CD4-positive, alpha-beta T cell (primary cell): ENCODE measurements at regions of chrX and their contacts with region 1.

Region 1: GRCh38 chrX:54044126-54044876 is at the start of gene PHF8:
- DNase-seq: peak; percentile 89 to 97 (median 94)
- ATAC-seq: peak; percentile 84
- H3K4me3 ChIP-seq: peak within 1 kb of the TSS; percentile 75
- H3K4me3 Mint-ChIP-seq: peak within 1 kb of the TSS; percentile 96
- H3K27ac ChIP-seq: peak within 1 kb of the TSS; percentile 89 to 90
- H3K27ac Mint-ChIP-seq: peak within 1 kb of the TSS; percentile 99
- H3K4me1 ChIP-seq: peaks cover 13% of the 10 kb centered on the region
- H3K4me1 Mint-ChIP-seq: peaks cover 29% of the 10 kb centered on the region
- H3K27me3 ChIP-seq: no peaks in the 10 kb centered on the region
- H3K27me3 Mint-ChIP-seq: no peaks in the 10 kb centered on the region
- CTCF ChIP-seq: no peak
- total RNA-seq, gene PHF8: 46.1 to 49.9 TPM

Region 2: DNA sequence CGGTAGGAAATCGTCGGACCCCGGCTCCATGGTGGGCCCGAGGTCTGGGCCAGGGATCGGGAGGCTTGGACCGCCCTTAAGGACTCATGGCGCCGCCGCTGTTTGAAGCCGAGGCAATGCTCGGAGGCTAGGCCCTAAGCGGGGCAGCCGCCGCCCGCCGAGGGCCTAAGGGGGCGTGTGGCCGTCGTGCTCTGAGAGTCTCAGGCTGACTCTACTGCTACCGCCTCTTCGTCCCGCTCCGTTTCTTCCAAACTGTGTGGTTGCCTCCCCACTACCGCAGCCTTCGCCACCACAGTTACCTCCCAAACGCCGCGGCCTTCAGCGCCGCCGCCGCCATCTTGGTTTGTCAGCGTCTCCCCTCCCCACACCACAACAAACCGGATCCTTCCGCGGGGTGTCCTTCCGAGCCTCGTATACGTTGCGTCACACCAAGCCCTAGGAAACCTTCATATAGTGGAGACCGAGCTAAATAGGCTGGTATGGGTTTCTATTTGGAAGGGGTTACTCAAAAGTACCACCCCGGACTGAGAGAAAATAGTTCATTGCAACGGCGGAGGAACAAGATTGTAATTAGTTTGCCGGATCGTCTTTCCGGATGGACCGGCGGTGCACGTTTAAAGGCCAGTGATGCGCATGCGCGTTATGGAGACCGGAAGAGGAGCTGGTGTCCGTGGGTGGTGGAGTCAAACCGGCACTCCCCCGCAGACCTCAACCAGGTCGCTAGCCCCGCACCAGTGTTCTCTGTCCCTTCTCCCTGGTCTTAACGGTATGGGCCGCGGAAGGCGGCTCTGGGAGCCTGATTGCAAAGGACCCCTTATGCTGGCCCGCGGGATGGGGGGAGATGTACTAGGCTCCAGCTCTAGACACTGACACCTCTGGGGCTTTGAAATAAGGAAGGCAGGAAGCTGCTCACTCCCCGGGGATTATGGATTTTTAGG is 819.2 kb before region 1 on chrX and contains the start of gene KDM5C:
- CTCF ChIA-PET with region 1: no interaction called
- POLR2A ChIA-PET with region 1: interaction called, 6 read pairs
- intact Hi-C with region 1: loop called in 1 of 2 experiments (anchors 10 kb)
- DNase-seq: peak; percentile 68 to 94 (median 88)
- ATAC-seq: peak; percentile 74
- H3K4me3 ChIP-seq: peak within 1 kb of the TSS; percentile 98
- H3K4me3 Mint-ChIP-seq: peak within 1 kb of the TSS; percentile 100
- H3K27ac ChIP-seq: peak within 1 kb of the TSS; percentile 89 to 91
- H3K27ac Mint-ChIP-seq: peak within 1 kb of the TSS; percentile 95
- H3K4me1 ChIP-seq: peaks cover 32% of the 10 kb centered on the region
- H3K4me1 Mint-ChIP-seq: peaks cover 38% of the 10 kb centered on the region
- H3K27me3 ChIP-seq: no peaks in the 10 kb centered on the region
- H3K27me3 Mint-ChIP-seq: no peaks in the 10 kb centered on the region
- CTCF ChIP-seq: no peak
- total RNA-seq, gene KDM5C: 236 to 237 TPM

Region 3: GRCh38 chrX:53433651-53434639 is 610.4 kb before region 1 on chrX and contains the start of gene HSD17B10:
- CTCF ChIA-PET with region 1: no interaction called
- POLR2A ChIA-PET with region 1: no interaction called
- intact Hi-C with region 1: loop called in 1 of 2 experiments (anchors 10 kb)
- DNase-seq: peak; percentile 67 to 92 (median 80)
- ATAC-seq: peak; percentile 98
- H3K4me3 ChIP-seq: peak within 1 kb of the TSS; percentile 63
- H3K4me3 Mint-ChIP-seq: peak within 1 kb of the TSS; percentile 99
- H3K27ac ChIP-seq: peak within 1 kb of the TSS; percentile 34 to 39
- H3K27ac Mint-ChIP-seq: peak within 1 kb of the TSS; percentile 93
- H3K4me1 ChIP-seq: peaks cover 18% of the 10 kb centered on the region
- H3K4me1 Mint-ChIP-seq: peaks cover 16% of the 10 kb centered on the region
- H3K27me3 ChIP-seq: no peaks in the 10 kb centered on the region
- H3K27me3 Mint-ChIP-seq: peaks cover 3% of the 10 kb centered on the region
- CTCF ChIP-seq: no peak
- total RNA-seq, gene HSD17B10: 27.0 to 28.6 TPM

Region 4: DNA sequence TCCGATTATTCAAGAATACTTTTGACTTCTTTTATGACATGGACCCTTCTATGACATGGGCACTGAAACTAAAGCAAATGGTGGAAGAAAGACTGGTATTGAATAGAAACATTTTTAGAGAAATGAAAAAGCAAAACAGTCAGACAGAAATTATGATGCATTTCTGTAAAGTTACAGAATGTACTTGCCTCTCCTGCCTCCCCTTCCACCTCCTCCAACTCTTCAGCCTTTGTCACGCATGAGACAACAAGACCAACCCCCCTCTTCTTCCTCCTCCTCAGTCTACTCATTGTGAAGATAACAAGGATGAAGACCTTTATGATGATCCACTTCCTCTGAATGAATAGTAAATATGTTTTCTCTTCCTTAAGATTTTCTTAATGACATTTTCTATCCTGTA is 311.5 kb before region 1 on chrX:
- CTCF ChIA-PET with region 1: no interaction called
- POLR2A ChIA-PET with region 1: no interaction called
- intact Hi-C with region 1: no loop called
- DNase-seq: peak in 1 of 14 experiments; percentile 4
- ATAC-seq: no peak
- H3K4me3 ChIP-seq: no peak overlapping the region
- H3K4me3 Mint-ChIP-seq: no peak overlapping the region
- H3K27ac ChIP-seq: no peak overlapping the region
- H3K27ac Mint-ChIP-seq: no peak overlapping the region
- H3K4me1 ChIP-seq: peaks cover 5% of the 10 kb centered on the region
- H3K4me1 Mint-ChIP-seq: peaks cover 18% of the 10 kb centered on the region
- H3K27me3 ChIP-seq: no peaks in the 10 kb centered on the region
- H3K27me3 Mint-ChIP-seq: no peaks in the 10 kb centered on the region
- CTCF ChIP-seq: no peak

Region 5: DNA sequence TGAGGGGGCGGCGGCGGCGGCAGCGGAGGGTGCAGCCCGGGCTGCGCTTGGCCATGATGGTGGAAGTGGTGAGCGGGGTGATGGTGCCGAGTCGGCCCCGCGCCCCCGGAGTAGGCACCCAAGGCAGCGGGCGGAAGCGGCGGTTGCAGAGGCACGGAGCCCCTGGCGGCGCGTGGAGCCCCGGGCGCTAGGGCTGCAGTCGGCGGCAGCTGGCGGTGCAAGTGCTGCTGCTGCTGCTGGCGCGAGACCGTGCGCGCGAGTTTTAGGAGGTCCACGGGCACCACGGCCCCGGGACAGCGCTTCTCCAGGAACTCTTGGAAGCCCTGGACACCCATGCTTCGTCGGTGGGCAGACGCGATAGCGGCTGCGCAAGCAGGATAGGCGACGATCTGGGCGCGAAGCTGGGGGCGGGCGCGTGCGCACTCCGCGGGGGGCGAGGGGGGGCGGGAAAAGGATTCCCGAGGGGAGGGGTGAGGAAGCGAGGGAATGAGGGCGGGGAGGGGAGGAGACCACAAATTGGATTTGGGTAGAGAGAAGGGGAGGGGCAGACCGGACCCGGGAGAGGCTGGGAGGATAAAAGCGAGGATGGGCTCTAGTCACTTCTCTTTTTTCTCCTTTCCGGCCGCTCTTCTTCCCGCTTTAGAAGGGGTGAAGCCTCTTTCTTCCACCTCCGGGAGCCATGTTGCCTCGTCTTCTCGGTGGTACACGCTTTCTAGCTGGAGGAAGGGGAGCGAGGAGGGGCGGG is 138.7 kb after region 1 on chrX and contains the start of gene FAM120C:
- CTCF ChIA-PET with region 1: interaction called, 3 read pairs
- POLR2A ChIA-PET with region 1: interaction called, 43 read pairs
- intact Hi-C with region 1: loop called (anchors 1 to 2 kb)
- DNase-seq: peak; percentile 41 to 82 (median 56)
- ATAC-seq: peak; percentile 69
- H3K4me3 ChIP-seq: peak within 1 kb of the TSS; percentile 67
- H3K4me3 Mint-ChIP-seq: peak within 1 kb of the TSS; percentile 92
- H3K27ac ChIP-seq: peak within 1 kb of the TSS; percentile 69 to 75
- H3K27ac Mint-ChIP-seq: peak within 1 kb of the TSS; percentile 86
- H3K4me1 ChIP-seq: peaks cover 29% of the 10 kb centered on the region
- H3K4me1 Mint-ChIP-seq: peaks cover 42% of the 10 kb centered on the region
- H3K27me3 ChIP-seq: no peaks in the 10 kb centered on the region
- H3K27me3 Mint-ChIP-seq: no peaks in the 10 kb centered on the region
- CTCF ChIP-seq: no peak
- total RNA-seq, gene FAM120C: 12.3 to 13.3 TPM

Region 6: GRCh38 chrX:54529552-54530357 is 485.5 kb after region 1 on chrX and contains the start of gene GNL3L:
- CTCF ChIA-PET with region 1: no interaction called
- POLR2A ChIA-PET with region 1: interaction called, 14 read pairs
- intact Hi-C with region 1: loop called (anchors 5 kb)
- DNase-seq: peak; percentile 56 to 90 (median 79)
- ATAC-seq: peak; percentile 84
- H3K4me3 ChIP-seq: peak within 1 kb of the TSS; percentile 76
- H3K4me3 Mint-ChIP-seq: peak within 1 kb of the TSS; percentile 99
- H3K27ac ChIP-seq: peak within 1 kb of the TSS; percentile 64 to 90
- H3K27ac Mint-ChIP-seq: peak within 1 kb of the TSS; percentile 94
- H3K4me1 ChIP-seq: peaks cover 38% of the 10 kb centered on the region
- H3K4me1 Mint-ChIP-seq: peaks cover 44% of the 10 kb centered on the region
- H3K27me3 ChIP-seq: no peaks in the 10 kb centered on the region
- H3K27me3 Mint-ChIP-seq: no peaks in the 10 kb centered on the region
- CTCF ChIP-seq: no peak
- total RNA-seq, gene GNL3L: 21.5 to 22.8 TPM

Region 7: GRCh38 chrX:54808605-54809483 is 764.5 kb after region 1 on chrX:
- CTCF ChIA-PET with region 1: no interaction called
- POLR2A ChIA-PET with region 1: interaction called, 6 read pairs
- intact Hi-C with region 1: loop called (anchors 5 kb)
- DNase-seq: peak; percentile 75 to 97 (median 84)
- ATAC-seq: peak; percentile 70
- H3K4me3 ChIP-seq: peak overlapping the region; percentile 93
- H3K4me3 Mint-ChIP-seq: peak overlapping the region; percentile 95
- H3K27ac ChIP-seq: peak overlapping the region; percentile 65 to 88
- H3K27ac Mint-ChIP-seq: peak overlapping the region; percentile 98
- H3K4me1 ChIP-seq: peaks cover 25% of the 10 kb centered on the region
- H3K4me1 Mint-ChIP-seq: peaks cover 24% of the 10 kb centered on the region
- H3K27me3 ChIP-seq: no peaks in the 10 kb centered on the region
- H3K27me3 Mint-ChIP-seq: no peaks in the 10 kb centered on the region
- CTCF ChIP-seq: no peak

Region 8: DNA sequence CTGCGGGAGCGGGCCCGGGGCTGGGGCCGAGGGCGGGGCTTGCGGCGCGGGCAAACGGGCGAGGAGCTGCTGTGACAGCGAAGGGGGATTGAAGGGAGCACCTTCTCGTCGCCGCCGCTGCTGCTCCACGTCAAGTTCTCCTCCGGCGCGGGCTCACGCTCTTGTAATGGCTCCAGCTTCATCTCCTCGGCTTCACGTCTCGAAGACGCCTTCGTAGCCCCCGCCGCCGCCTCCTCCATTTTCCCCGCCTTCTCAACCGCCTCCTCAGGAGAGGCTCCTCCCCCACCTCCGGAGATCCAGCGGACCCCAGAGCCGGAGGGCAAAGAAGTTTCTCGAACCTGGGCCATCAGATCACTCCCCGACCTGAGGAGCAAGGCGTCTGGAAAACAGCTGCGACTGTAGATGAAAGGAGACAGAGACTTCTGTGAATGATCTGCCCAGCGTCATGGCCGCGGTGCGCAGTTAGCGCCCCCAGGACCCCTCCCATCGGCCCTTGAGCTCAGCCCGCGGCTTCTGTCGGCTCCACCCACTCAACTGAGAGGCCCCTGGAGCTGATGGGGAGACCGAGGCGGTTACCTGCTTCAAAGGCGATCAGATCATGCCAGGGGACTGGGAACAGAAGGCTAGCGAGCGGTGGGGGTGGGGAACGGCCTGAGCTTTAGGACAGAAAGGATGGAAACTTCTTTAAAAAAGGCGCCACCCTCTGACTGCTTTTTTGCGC is 1444.5 kb after region 1 on chrX:
- CTCF ChIA-PET with region 1: no interaction called
- POLR2A ChIA-PET with region 1: interaction called, 16 read pairs
- intact Hi-C with region 1: no loop called
- DNase-seq: peak; percentile 43 to 80 (median 59)
- ATAC-seq: peak; percentile 75
- H3K4me3 ChIP-seq: peak overlapping the region; percentile 87
- H3K4me3 Mint-ChIP-seq: peak overlapping the region; percentile 98
- H3K27ac ChIP-seq: peak overlapping the region; percentile 72 to 85
- H3K27ac Mint-ChIP-seq: peak overlapping the region; percentile 96
- H3K4me1 ChIP-seq: peaks cover 10% of the 10 kb centered on the region
- H3K4me1 Mint-ChIP-seq: peaks cover 17% of the 10 kb centered on the region
- H3K27me3 ChIP-seq: no peaks in the 10 kb centered on the region
- H3K27me3 Mint-ChIP-seq: no peaks in the 10 kb centered on the region
- CTCF ChIP-seq: no peak